HepG2 (cell line): ENCODE measurements at regions of chr16 and their contacts with region 1.

Region 1: DNA sequence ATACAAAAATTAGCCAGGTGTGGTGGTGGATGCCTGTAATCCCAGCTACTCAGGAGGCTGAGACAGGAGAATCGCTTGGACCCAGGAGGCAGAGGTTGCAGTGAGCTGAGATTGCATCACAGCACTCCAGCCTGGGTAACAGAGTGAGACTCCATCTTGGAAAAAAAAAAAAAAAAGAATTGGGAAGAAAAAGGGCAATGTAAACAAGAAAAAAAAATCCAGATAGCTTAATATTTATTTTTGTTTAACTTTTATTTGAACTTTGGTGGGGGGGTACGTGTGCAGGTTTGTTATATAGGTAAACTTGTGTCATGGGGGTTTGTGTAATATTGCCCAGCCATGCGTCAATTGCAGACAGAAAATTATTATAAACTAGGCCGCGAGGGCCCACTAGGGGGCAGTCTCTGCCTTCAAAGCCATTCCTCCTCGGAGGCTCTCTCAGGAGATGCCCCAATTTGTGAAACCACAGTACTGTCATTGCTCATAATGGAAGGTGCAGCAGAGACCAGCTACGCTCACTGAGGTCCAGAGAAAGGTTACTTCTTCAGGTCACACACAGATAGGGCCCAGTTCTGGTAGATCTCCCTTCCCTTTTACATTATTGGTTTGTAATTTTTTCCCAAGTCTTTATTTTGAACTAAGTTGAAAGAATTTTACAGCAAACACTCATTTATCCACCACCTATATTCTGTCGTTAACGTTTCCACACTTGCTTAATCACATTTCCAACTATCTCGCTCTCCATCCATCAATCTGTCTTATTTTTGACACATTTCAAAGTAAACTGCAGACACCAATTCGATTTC is 206.2 kb downstream of the PRKCB start:
- DNase-seq: peak; percentile 50
- ATAC-seq: peak; percentile 80
- H3K4me3 ChIP-seq: no peak overlapping the region
- H3K27ac ChIP-seq: no peak overlapping the region
- H3K4me1 ChIP-seq: no peaks in the 10 kb centered on the region
- H3K27me3 ChIP-seq: no peaks in the 10 kb centered on the region; a peak in 2 of 5 replicates
- CTCF ChIP-seq: peak; percentile 83
- EP300 ChIP-seq: no peak
- POLR2A ChIP-seq: no peak
- RAD21 ChIP-seq: peak; percentile 74; the same call in 1 of the 2 replicates

Region 2: DNA sequence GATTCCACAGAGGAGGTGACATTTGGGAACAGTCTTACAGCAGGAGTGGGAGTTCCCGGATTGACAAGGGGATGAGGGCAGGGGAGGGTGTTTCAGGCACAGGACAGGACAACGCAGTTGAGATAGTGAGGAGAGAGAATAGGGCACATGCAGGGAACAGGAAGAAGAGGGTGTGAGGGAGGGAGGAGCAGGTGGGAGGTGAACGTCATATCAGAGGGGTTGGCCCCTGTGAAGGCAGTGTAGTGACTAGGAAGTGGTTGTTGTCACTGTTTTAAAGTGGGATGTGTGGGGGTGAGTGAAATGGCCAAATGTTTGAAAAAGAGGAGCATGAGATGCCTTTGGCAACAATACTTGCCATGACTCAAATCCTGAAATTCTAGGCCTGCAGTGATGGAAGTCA is 194.1 kb before region 1 on chr16:
- CTCF ChIA-PET with region 1: no interaction called
- POLR2A ChIA-PET with region 1: no interaction called
- in situ Hi-C with region 1: no loop called
- intact Hi-C with region 1: no loop called
- DNase-seq: no peak
- ATAC-seq: no peak
- H3K4me3 ChIP-seq: no peak overlapping the region
- H3K27ac ChIP-seq: no peak overlapping the region
- H3K4me1 ChIP-seq: no peaks in the 10 kb centered on the region
- H3K27me3 ChIP-seq: peaks cover 1 to 5% of the 10 kb centered on the region in 2 experiments; a peak in 2 of 5 replicates
- CTCF ChIP-seq: no peak
- EP300 ChIP-seq: no peak
- POLR2A ChIP-seq: no peak
- RAD21 ChIP-seq: no peak

Region 3: DNA sequence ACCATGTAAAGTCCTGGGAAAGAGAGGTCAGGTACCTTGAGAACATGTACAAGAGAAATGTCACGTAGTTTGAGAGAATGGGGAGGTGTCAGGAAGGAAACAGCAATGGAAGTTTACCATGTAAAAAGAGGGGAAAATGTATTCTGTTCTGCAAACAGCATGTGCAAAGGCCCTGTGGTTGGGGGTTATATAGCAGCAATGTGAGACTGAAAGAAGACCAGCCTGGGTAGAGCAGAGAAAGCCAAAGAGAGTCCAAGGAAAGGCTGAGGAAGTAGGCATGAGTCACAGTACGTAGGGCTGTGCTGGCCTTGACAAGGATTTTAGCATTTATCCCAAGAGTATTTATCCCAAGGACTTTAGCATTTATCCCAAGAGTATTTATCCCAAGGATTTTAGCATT is 72.8 kb after region 1 on chr16:
- CTCF ChIA-PET with region 1: interaction called, 3 read pairs
- POLR2A ChIA-PET with region 1: no interaction called
- in situ Hi-C with region 1: no loop called
- intact Hi-C with region 1: loop called (anchors 2 kb)
- DNase-seq: no peak
- ATAC-seq: no peak
- H3K4me3 ChIP-seq: no peak overlapping the region
- H3K27ac ChIP-seq: no peak overlapping the region
- H3K4me1 ChIP-seq: no peaks in the 10 kb centered on the region
- H3K27me3 ChIP-seq: peaks cover 0 to 20% of the 10 kb centered on the region in 2 experiments; a peak in 2 of 5 replicates
- CTCF ChIP-seq: no peak
- EP300 ChIP-seq: no peak
- POLR2A ChIP-seq: no peak
- RAD21 ChIP-seq: no peak

Region 4: DNA sequence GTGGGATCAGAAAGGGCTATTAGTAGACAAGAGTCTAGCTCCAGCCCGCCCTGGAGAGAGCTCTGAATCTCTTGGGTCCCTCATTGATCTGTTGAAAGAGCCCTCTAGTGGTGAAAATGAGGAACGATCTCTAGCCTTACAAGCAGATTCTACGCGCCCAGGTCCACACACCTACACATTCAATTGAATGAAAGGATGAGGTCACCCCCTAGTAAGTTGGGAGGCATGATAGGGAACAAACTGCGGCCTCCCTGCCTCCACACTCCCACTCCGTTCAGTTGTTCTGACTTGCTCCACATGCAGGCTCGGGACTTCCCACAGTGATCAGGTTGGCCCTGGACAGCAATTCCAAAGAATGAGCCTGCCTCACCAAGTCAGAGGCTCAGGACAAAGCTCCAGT is 211.2 kb after region 1 on chr16:
- CTCF ChIA-PET with region 1: interaction called, 25 read pairs
- POLR2A ChIA-PET with region 1: no interaction called
- in situ Hi-C with region 1: loop called (anchors 5 kb)
- intact Hi-C with region 1: no loop called
- DNase-seq: peak; percentile 47
- ATAC-seq: peak; percentile 93
- H3K4me3 ChIP-seq: no peak overlapping the region
- H3K27ac ChIP-seq: no peak overlapping the region
- H3K4me1 ChIP-seq: no peaks in the 10 kb centered on the region
- H3K27me3 ChIP-seq: peaks cover 0 to 4% of the 10 kb centered on the region in 2 experiments; a peak in 1 of 5 replicates
- CTCF ChIP-seq: peak; percentile 79
- EP300 ChIP-seq: no peak
- POLR2A ChIP-seq: no peak
- RAD21 ChIP-seq: peak; percentile 48; the same call in 1 of the 2 replicates

Region 5: GRCh38 chr16:24499193-24499814 is 457.3 kb after region 1 on chr16:
- CTCF ChIA-PET with region 1: interaction called, 14 read pairs
- POLR2A ChIA-PET with region 1: no interaction called
- in situ Hi-C with region 1: loop called (anchors 5 kb)
- intact Hi-C with region 1: loop called (anchors 1 kb)
- DNase-seq: peak; percentile 21
- ATAC-seq: peak; percentile 80
- H3K4me3 ChIP-seq: no peak overlapping the region
- H3K27ac ChIP-seq: no peak overlapping the region
- H3K4me1 ChIP-seq: 0 out of 2 replicates have a peak, but pooled peaks cover under 1% of the 10 kb centered on the region
- H3K27me3 ChIP-seq: peaks cover 0 to 11% of the 10 kb centered on the region in 2 experiments; a peak in 1 of 5 replicates
- CTCF ChIP-seq: peak; percentile 82
- EP300 ChIP-seq: no peak
- POLR2A ChIP-seq: no peak
- RAD21 ChIP-seq: peak; percentile 57; the same call in 1 of the 2 replicates

Region 6: GRCh38 chr16:24906199-24907020 is 864.4 kb after region 1 on chr16:
- CTCF ChIA-PET with region 1: no interaction called
- POLR2A ChIA-PET with region 1: no interaction called
- in situ Hi-C with region 1: no loop called
- intact Hi-C with region 1: no loop called
- DNase-seq: peak; percentile 11
- ATAC-seq: peak; percentile 62
- H3K4me3 ChIP-seq: no peak overlapping the region
- H3K27ac ChIP-seq: no peak overlapping the region
- H3K4me1 ChIP-seq: no peaks in the 10 kb centered on the region
- H3K27me3 ChIP-seq: no peaks in the 10 kb centered on the region
- CTCF ChIP-seq: peak; percentile 57
- EP300 ChIP-seq: no peak
- POLR2A ChIP-seq: no peak
- RAD21 ChIP-seq: no peak